Pancreas (tissue), 10 donors: ENCODE measurements at regions of chr17 and their contacts with region 1.

Region 1: GRCh38 chr17:47698749-47699535 is 5.0 kb downstream of the TBKBP1 start:
- DNase-seq: peak in 3 of 6 donors; percentile 64 to 89 (median 65)
- ATAC-seq: peak in 3 of 4 donors; percentile 24 to 40 (median 29)
- H3K4me3 ChIP-seq: no peak overlapping the region
- H3K27ac ChIP-seq: no peak overlapping the region
- H3K4me1 ChIP-seq: no peaks in the 10 kb centered on the region
- H3K27me3 ChIP-seq: no peaks in the 10 kb centered on the region
- CTCF ChIP-seq: peak; percentile 91 to 93 (median 92)

Region 2: GRCh38 chr17:47649153-47649971 is 49.6 kb before region 1 on chr17 and contains the start of gene KPNB1:
- intact Hi-C with region 1: no loop called
- DNase-seq: peak; percentile 98 to 100 (median 99)
- ATAC-seq: peak; percentile 87 to 94 (median 88)
- H3K4me3 ChIP-seq: peak within 1 kb of the TSS; percentile 67 to 87 (median 84)
- H3K27ac ChIP-seq: peak within 1 kb of the TSS; percentile 68 to 89 (median 78)
- H3K4me1 ChIP-seq: peaks cover 0 to 26% (median 10%) of the 10 kb centered on the region in 3 donors
- H3K27me3 ChIP-seq: no peaks in the 10 kb centered on the region
- CTCF ChIP-seq: no peak
- total RNA-seq, gene KPNB1: 91.5 to 126 (median 118) TPM

Region 3: GRCh38 chr17:47802341-47803022 is 103.5 kb after region 1 on chr17:
- intact Hi-C with region 1: loop called in 1 of 3 experiments (anchors 10 kb)
- DNase-seq: peak in 2 of 6 donors; percentile 52 to 59
- ATAC-seq: peak; percentile 76 to 93 (median 88)
- H3K4me3 ChIP-seq: no peak overlapping the region
- H3K27ac ChIP-seq: no peak overlapping the region
- H3K4me1 ChIP-seq: no peaks in the 10 kb centered on the region
- H3K27me3 ChIP-seq: no peaks in the 10 kb centered on the region
- CTCF ChIP-seq: peak in 3 of 4 donors; percentile 42 to 47 (median 42)

Region 4: GRCh38 chr17:47987240-47987835 is 288.4 kb after region 1 on chr17:
- intact Hi-C with region 1: no loop called
- DNase-seq: peak in 2 of 6 donors; percentile 18 to 77
- ATAC-seq: peak; percentile 46 to 73 (median 62)
- H3K4me3 ChIP-seq: no peak overlapping the region
- H3K27ac ChIP-seq: peak overlapping the region in 1 of 4 donors; percentile 33
- H3K4me1 ChIP-seq: peaks cover 0 to 4% (median 0%) of the 10 kb centered on the region in 3 donors
- H3K27me3 ChIP-seq: no peaks in the 10 kb centered on the region
- CTCF ChIP-seq: no peak

Region 5: GRCh38 chr17:47999582-47999981 is 300.6 kb after region 1 on chr17:
- intact Hi-C with region 1: no loop called
- DNase-seq: no peak
- ATAC-seq: no peak
- H3K4me3 ChIP-seq: no peak overlapping the region
- H3K27ac ChIP-seq: no peak overlapping the region
- H3K4me1 ChIP-seq: peaks cover 5 to 21% (median 10%) of the 10 kb centered on the region in 3 donors
- H3K27me3 ChIP-seq: no peaks in the 10 kb centered on the region
- CTCF ChIP-seq: no peak